Transverse colon (tissue), 4 donors: ENCODE measurements at regions of chr13 and their contacts with region 1.

Region 1: DNA sequence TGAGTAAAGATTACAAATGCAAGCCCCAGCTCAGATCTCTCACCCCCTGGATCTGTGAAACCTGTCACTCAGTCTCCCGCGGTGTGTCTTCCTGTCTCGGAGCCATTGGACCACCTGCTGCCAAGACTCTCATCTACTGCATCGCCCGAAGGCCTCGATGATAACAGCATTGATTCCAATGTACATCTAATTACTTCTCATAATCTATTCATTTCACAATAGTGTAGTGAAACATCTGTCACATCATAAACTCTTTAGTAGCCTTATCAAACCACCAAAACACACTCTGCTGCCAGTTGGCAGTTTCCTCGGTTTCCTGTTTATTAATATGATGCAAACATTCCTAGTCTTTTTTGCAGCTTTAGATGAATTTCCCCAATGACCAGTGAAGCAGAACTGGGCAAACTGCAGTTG is 220.3 kb downstream of the POU4F1 start:
- DNase-seq: no peak
- H3K4me3 ChIP-seq: no peak overlapping the region
- H3K27ac ChIP-seq: no peak overlapping the region
- H3K4me1 ChIP-seq: no peaks in the 10 kb centered on the region
- H3K27me3 ChIP-seq: no peaks in the 10 kb centered on the region
- CTCF ChIP-seq: no peak
- EP300 ChIP-seq: no peak
- POLR2A ChIP-seq: no peak

Region 2: DNA sequence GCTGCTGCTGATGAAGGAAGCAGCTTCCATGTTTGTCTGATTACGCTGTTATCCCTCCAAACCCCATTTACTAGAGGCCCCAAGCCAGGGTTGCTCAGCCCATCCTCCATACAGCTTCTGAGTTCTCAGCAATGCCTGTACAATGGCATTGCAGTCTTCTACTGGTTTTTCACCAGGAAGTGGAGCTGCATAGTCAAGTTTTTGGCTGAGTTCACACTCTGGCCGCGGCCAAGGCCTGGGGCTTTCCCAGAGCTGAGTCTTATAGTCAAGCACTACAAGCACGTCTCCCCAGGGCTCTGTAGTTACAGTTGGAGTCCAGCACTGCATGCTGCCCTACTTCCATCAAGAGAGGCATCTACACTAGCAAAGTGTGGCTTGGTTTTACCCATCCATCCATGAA is 37.7 kb after region 1 on chr13:
- in situ Hi-C with region 1: no loop called
- intact Hi-C with region 1: loop called (anchors 1 kb)
- DNase-seq: no peak
- H3K4me3 ChIP-seq: no peak overlapping the region
- H3K27ac ChIP-seq: no peak overlapping the region
- H3K4me1 ChIP-seq: no peaks in the 10 kb centered on the region
- H3K27me3 ChIP-seq: no peaks in the 10 kb centered on the region
- CTCF ChIP-seq: no peak
- EP300 ChIP-seq: no peak
- POLR2A ChIP-seq: no peak